ENCODE measurements at regions of chr11 and their contacts with region 1.

Region 1: GRCh38 chr11:67082035-67082791 is 25.6 kb downstream of the RHOD start:
- DNase-seq: no peak
- H3K4me3 Mint-ChIP-seq: peak overlapping the region; percentile 13
- H3K27ac Mint-ChIP-seq: no peak overlapping the region
- H3K4me1 Mint-ChIP-seq: peaks cover 16% of the 10 kb centered on the region
- H3K27me3 Mint-ChIP-seq: peaks cover 32% of the 10 kb centered on the region

Region 2: GRCh38 chr11:66855574-66856495 is 226.4 kb before region 1 on chr11:
- CTCF ChIA-PET with region 1: no interaction called
- DNase-seq: peak; percentile 92
- H3K4me3 Mint-ChIP-seq: peak overlapping the region; percentile 86
- H3K27ac Mint-ChIP-seq: peak overlapping the region; percentile 85
- H3K4me1 Mint-ChIP-seq: peaks cover 34% of the 10 kb centered on the region
- H3K27me3 Mint-ChIP-seq: peaks cover 3% of the 10 kb centered on the region

Region 3: GRCh38 chr11:67252831-67253239 is 170.6 kb after region 1 on chr11:
- CTCF ChIA-PET with region 1: interaction called, 11 read pairs
- DNase-seq: peak; percentile 64
- H3K4me3 Mint-ChIP-seq: no peak overlapping the region
- H3K27ac Mint-ChIP-seq: peak overlapping the region; percentile 85
- H3K4me1 Mint-ChIP-seq: peaks cover 52% of the 10 kb centered on the region
- H3K27me3 Mint-ChIP-seq: no peaks in the 10 kb centered on the region